A673 (cell line): ENCODE measurements at regions of chr10 and their contacts with region 1.

Region 1: GRCh38 chr10:71319042-71319799 is at the start of gene SLC29A3:
- DNase-seq: peak; percentile 92
- H3K4me3 ChIP-seq: peak within 1 kb of the TSS; percentile 88
- H3K27ac ChIP-seq: peak within 1 kb of the TSS; percentile 78
- H3K4me1 ChIP-seq: peaks cover 5% of the 10 kb centered on the region
- H3K27me3 ChIP-seq: no peaks in the 10 kb centered on the region
- CTCF ChIP-seq: peak; percentile 79
- total RNA-seq, gene SLC29A3: 6.1 and 6.6 TPM in 2 replicates

Region 2: GRCh38 chr10:71569775-71570588 is 250.8 kb after region 1 on chr10:
- CTCF ChIA-PET with region 1: interaction called, 4 read pairs
- POLR2A ChIA-PET with region 1: no interaction called
- intact Hi-C with region 1: loop called (anchors 10 kb)
- DNase-seq: peak; percentile 73
- H3K4me3 ChIP-seq: no peak overlapping the region
- H3K27ac ChIP-seq: no peak overlapping the region
- H3K4me1 ChIP-seq: peaks cover 1% of the 10 kb centered on the region
- H3K27me3 ChIP-seq: no peaks in the 10 kb centered on the region
- CTCF ChIP-seq: peak; percentile 84

Region 3: DNA sequence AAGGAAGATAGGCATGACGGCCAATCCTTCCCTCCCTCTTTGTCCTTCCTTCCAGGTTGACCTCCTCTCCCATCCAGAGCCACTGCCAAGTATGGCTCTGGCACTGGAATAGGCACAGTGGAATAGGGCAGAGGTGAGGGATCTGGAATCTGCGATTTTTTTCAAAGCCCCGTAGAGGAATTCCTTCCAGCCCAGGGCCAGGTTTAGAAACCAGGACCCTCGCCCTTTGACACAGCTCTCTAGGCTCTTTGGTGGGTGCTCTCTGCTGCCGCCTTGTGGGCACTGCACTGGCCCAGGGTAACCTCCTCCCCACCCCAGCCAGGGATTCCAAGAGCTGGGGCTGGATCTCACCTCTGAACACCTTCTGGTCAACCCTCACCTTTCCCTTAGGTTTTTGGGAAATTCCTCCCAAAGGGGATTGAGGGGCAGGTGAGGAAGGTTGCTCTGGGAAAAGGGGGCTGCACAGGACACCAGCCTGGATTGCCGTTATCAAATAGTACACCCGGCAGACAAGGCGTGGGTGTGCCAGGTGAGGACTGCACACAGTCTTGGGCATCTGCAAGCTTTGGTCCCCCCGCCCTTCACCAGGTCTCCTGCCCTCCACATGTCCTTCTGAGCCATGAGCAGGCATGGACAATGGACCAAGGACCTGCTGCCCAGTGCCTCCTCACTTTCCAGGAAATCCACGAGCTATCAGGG is 377.6 kb after region 1 on chr10:
- CTCF ChIA-PET with region 1: interaction called, 14 read pairs
- POLR2A ChIA-PET with region 1: no interaction called
- intact Hi-C with region 1: loop called (anchors 2 kb)
- DNase-seq: peak; percentile 54
- H3K4me3 ChIP-seq: no peak overlapping the region
- H3K27ac ChIP-seq: no peak overlapping the region
- H3K4me1 ChIP-seq: no peaks in the 10 kb centered on the region
- H3K27me3 ChIP-seq: no peaks in the 10 kb centered on the region
- CTCF ChIP-seq: peak; percentile 85

Region 4: GRCh38 chr10:71812016-71812912 is 493.0 kb after region 1 on chr10:
- CTCF ChIA-PET with region 1: interaction called, 3 read pairs
- POLR2A ChIA-PET with region 1: no interaction called
- intact Hi-C with region 1: loop called (anchors 5 kb)
- DNase-seq: peak; percentile 63
- H3K4me3 ChIP-seq: no peak overlapping the region
- H3K27ac ChIP-seq: no peak overlapping the region
- H3K4me1 ChIP-seq: no peaks in the 10 kb centered on the region
- H3K27me3 ChIP-seq: no peaks in the 10 kb centered on the region
- CTCF ChIP-seq: peak; percentile 86

Region 5: DNA sequence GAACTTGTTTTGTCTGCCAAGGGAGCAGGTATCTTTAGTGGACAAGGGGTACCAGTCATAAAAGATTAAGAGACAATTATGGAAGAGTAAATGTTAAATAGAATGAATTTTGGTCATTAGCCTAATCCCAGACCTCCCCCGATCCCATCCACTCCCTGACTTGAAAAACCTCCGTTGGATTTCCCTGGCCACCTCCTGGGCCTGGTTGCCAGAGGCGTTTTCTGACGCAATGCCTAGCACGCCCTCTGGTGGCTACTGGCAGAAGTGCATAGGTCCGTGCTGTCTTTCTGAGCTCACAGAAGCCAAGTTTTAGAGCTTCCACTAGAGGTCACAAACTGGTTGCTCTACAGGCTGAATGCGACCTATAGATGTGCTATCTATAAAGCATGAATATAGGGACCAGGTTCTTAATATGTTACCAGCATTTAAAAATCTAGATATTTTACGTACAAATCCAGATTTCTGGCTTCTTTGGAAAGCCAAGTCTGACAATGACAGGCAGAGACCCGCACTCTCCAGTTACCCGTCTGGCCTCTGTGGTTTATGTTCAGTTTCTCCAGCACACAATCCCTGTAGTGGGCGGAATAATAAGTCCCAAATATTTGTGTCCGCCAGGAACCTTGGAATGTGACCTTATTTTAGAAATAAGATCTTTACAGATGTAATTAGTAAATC is 729.4 kb after region 1 on chr10:
- CTCF ChIA-PET with region 1: no interaction called
- POLR2A ChIA-PET with region 1: no interaction called
- intact Hi-C with region 1: loop called (anchors 10 kb)
- DNase-seq: peak; percentile 94
- H3K4me3 ChIP-seq: no peak overlapping the region
- H3K27ac ChIP-seq: no peak overlapping the region
- H3K4me1 ChIP-seq: no peaks in the 10 kb centered on the region
- H3K27me3 ChIP-seq: no peaks in the 10 kb centered on the region
- CTCF ChIP-seq: peak; percentile 100